Activated CD8-positive, alpha-beta T cell treated with anti-CD3 and anti-CD28 coated beads for 36 hours (primary cell): ENCODE measurements at regions of chr1 and their contacts with region 1.

Region 1: GRCh38 chr1:52748119-52748518 is 21.9 kb downstream of the ZYG11B start:
- DNase-seq: no peak
- ATAC-seq: no peak
- H3K4me3 Mint-ChIP-seq: no peak overlapping the region
- H3K27ac Mint-ChIP-seq: no peak overlapping the region
- H3K4me1 Mint-ChIP-seq: peaks cover 18% of the 10 kb centered on the region
- H3K27me3 Mint-ChIP-seq: no peaks in the 10 kb centered on the region
- CTCF ChIP-seq: peak; percentile 49

Region 2: DNA sequence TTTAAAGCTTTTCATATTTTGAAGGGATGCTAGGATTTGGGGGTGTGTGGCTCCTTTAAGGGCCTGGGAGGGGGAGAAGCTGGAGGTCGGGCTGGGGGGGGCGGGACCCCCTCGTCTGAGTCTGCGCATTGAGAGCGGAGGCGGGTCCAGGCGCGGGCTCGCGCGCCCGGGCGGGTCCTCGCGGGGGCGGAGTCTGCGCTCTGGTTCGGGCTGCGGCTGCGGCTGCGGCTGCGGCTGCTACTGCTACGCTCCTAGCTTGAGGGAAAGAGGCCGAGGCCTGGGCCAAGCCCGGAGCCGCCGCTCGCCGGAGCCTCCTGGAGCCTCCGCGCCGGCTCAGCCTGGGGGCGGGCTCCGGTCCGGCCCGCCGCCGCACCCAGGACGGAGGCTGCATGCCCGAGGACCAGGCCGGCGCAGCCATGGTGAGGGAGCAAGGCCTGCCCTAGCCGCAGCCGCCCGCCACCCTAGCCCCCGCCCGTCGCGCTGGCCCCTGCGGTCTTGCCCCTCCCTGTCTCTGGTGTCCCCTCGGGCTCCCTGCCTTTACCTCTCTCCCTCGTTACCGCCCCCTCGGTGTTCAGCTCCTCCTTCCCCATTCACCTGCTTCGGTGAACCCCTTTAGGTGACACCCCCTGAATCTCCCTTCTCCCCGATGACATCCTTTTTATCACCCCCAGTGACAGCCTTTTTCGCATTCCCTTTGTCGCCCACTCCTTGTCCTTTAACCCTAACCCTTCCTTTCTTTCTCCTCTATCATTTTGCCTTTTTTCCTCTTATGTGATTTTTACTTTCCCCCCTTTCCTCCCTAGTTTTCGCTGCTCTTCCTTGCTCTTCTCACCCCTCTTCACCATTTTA is 21.6 kb before region 1 on chr1 and contains the start of gene ZYG11B:
- CTCF ChIA-PET with region 1: interaction called, 17 read pairs
- POLR2A ChIA-PET with region 1: no interaction called
- intact Hi-C with region 1: no loop called
- DNase-seq: peak; percentile 90
- ATAC-seq: peak; percentile 87
- H3K4me3 Mint-ChIP-seq: peak within 1 kb of the TSS; percentile 95
- H3K27ac Mint-ChIP-seq: peak within 1 kb of the TSS; percentile 86
- H3K4me1 Mint-ChIP-seq: peaks cover 29% of the 10 kb centered on the region
- H3K27me3 Mint-ChIP-seq: no peaks in the 10 kb centered on the region
- CTCF ChIP-seq: no peak
- total RNA-seq, gene ZYG11B: 10.8 to 10.9 TPM

Region 3: GRCh38 chr1:52767596-52768280 is 19.6 kb after region 1 on chr1:
- CTCF ChIA-PET with region 1: no interaction called
- POLR2A ChIA-PET with region 1: no interaction called
- intact Hi-C with region 1: no loop called
- DNase-seq: no peak
- ATAC-seq: peak; percentile 37
- H3K4me3 Mint-ChIP-seq: no peak overlapping the region
- H3K27ac Mint-ChIP-seq: no peak overlapping the region
- H3K4me1 Mint-ChIP-seq: peaks cover 10% of the 10 kb centered on the region
- H3K27me3 Mint-ChIP-seq: no peaks in the 10 kb centered on the region
- CTCF ChIP-seq: no peak

Region 4: DNA sequence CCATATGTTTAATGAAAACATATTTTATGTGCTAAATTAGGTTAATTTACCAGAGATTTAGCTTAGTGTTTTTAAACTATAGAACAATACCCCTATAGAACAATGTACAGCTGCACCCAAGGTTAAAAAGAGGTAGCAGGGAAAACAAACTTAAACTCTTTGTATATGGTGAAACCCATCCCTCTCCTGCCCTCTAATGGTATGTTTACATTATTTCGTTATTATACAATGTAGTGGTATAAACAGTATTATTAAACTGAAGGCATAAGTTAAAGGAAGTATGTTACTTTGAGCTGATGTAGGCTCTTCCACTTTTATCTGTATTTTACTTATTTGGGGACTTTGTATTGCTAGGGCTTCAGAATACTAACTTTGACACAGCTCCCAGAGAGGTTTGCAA is 77.7 kb after region 1 on chr1:
- CTCF ChIA-PET with region 1: no interaction called
- POLR2A ChIA-PET with region 1: no interaction called
- intact Hi-C with region 1: no loop called
- DNase-seq: no peak
- ATAC-seq: no peak
- H3K4me3 Mint-ChIP-seq: no peak overlapping the region
- H3K27ac Mint-ChIP-seq: no peak overlapping the region
- H3K4me1 Mint-ChIP-seq: no peaks in the 10 kb centered on the region
- H3K27me3 Mint-ChIP-seq: no peaks in the 10 kb centered on the region
- CTCF ChIP-seq: no peak